Esophagus muscularis mucosa (tissue), 4 donors: ENCODE measurements at regions of chr4 and their contacts with region 1.

Region 1: GRCh38 chr4:129362674-129363274 is 266.8 kb downstream of the C4orf33 start:
- DNase-seq: no peak
- H3K4me3 ChIP-seq: no peak overlapping the region
- H3K27ac ChIP-seq: no peak overlapping the region
- H3K4me1 ChIP-seq: peaks cover 0 to 26% (median 22%) of the 10 kb centered on the region in 4 donors
- H3K27me3 ChIP-seq: no peaks in the 10 kb centered on the region
- CTCF ChIP-seq: peak; percentile 72 to 82 (median 78)
- EP300 ChIP-seq: no peak
- POLR2A ChIP-seq: no peak

Region 2: GRCh38 chr4:129545599-129546278 is 183.0 kb after region 1 on chr4:
- intact Hi-C with region 1: loop called (anchors 10 kb)
- DNase-seq: no peak
- H3K4me3 ChIP-seq: no peak overlapping the region
- H3K27ac ChIP-seq: peak overlapping the region in 3 of 4 donors; percentile 20 to 34 (median 33)
- H3K4me1 ChIP-seq: peaks cover 11 to 24% (median 13%) of the 10 kb centered on the region in 4 donors
- H3K27me3 ChIP-seq: no peaks in the 10 kb centered on the region
- CTCF ChIP-seq: no peak
- EP300 ChIP-seq: no peak
- POLR2A ChIP-seq: no peak